ENCODE measurements at regions of chr14 and their contacts with region 1.

Region 1: DNA sequence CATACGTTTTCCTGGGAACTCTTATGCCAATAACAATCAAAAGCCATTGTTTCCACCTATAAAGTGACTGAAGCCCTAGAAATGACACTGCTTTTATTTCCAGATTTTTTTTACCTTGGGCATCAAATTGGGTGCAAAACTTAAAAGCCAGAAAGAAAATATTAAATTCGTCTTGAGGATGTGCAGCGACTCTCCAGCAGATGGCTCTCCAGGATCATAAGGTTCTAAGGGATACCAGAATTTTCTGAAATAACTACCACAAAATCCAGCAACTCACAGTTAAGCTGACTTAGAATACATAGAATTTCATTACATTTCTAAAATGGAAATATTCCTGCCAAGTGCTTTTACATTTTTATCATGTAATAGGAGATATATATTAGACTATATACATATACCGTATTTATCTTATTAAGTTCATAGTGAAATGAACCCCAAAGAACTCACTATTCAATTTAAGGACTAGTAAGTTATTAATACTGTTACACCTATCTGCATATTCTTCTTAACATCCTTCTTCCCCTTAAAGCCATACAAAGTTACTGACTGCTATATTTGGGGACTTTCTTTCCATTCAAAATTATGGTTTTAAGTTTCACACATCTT is 44.0 kb downstream of the ARMH4 start:
- DNase-seq: no peak

Region 2: GRCh38 chr14:58072288-58073071 is 35.6 kb before region 1 on chr14:
- intact Hi-C with region 1: no loop called
- DNase-seq: no peak

Region 3: GRCh38 chr14:58152014-58152857 is 44.2 kb after region 1 on chr14 and contains the start of gene ARMH4:
- intact Hi-C with region 1: loop called (anchors 5 kb)
- DNase-seq: peak; percentile 90
- total RNA-seq, gene ARMH4: 6.4 TPM

Region 4: DNA sequence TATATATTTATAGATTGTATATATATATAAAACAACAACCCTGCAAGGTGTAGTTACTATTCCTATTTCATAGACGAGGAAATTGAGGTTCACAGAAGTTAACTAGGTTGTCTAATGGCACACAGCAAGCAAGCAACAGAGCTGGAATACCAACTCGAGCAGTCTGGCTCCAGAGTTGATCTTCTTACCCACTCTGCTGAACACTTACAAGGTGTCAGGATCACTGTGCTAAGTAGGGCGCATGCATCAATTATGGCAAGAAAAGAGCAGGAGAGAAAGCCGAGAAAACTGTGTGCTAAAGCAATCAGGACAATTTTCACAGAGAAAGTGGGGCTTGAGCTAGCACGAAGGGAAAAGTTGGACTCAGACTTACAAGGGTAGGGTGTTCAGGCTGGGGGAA is 59.8 kb after region 1 on chr14:
- intact Hi-C with region 1: loop called (anchors 2 kb)
- DNase-seq: no peak

Region 5: GRCh38 chr14:58193542-58193941 is 85.5 kb after region 1 on chr14:
- intact Hi-C with region 1: no loop called
- DNase-seq: no peak

Region 6: DNA sequence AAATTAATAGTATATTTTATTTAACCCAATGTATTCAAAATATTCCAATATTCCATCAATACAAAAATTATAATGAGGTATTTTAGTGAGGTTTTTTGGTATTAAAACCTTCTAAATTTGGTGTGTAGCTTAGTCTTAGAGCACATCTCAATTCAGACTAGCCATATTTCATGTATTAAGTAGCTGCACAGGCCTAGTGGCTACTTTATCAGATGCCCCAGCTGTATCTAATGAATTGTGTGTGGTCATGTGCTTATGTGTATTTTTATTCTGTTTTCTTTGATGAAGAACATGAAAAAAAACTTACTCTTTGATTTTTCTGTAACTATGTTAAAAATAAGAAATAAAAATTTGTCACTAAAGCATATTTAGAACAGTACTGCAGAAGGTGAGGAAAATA is 105.1 kb after region 1 on chr14:
- intact Hi-C with region 1: no loop called
- DNase-seq: no peak

Region 7: GRCh38 chr14:58353516-58354299 is 245.7 kb after region 1 on chr14:
- intact Hi-C with region 1: no loop called
- DNase-seq: no peak